ENCODE measurements at regions of chr19 and their contacts with region 1.

Region 1: GRCh38 chr19:1249298-1249989 is 1.1 kb downstream of the MIDN start:
- DNase-seq: peak; percentile 95
- ATAC-seq: peak; percentile 56
- H3K4me3 Mint-ChIP-seq: peak overlapping the region; percentile 74
- H3K27ac Mint-ChIP-seq: peak overlapping the region; percentile 82
- H3K4me1 Mint-ChIP-seq: peaks cover 9% of the 10 kb centered on the region
- H3K27me3 Mint-ChIP-seq: no peaks in the 10 kb centered on the region

Region 2: DNA sequence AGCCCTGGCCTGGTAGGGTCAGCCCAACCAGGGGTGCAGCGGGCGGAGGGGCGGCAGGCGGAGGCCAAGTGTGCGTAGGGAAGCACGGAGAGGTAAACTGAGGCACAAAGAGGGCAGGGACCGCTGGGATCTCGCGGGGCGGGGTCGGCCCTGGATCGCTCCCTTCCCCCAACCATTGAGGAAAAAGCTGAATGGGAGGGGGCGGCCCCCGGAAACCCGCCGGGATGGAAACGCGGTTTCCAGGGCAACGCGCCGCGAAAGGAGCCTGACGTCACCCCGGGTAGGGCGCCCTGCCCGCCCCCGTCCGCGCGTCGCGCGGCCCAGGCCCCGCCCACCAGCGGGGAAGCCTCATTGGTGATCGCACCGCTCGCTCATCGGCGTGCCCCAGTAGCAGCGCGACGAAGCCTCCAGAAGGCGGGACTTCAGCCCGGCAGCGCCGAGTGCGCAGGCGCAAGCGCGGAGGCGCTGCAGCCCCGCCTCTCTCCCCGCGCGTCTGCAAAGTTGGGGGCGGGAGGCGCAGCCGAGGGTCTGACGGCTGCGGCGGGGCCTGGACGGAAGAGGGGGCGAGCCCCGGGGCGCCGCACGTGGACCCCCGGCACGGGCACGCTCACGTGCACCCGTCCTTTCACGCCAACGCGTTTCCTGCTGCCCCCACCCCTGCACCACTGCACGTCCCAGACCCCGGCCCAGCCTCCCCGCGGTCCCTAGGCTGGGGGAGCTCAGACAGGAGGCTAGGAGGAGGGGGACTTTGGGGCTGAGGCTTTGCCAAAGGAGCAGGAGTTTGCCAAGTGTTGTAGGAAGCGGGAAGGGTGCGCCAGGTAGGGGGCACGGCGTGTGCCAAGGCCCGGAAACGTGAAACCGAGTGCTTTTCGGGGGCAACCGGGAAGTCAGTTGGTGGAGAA is 11.4 kb after region 1 on chr19:
- CTCF ChIA-PET with region 1: interaction called, 723 read pairs
- DNase-seq: peak; percentile 98
- ATAC-seq: peak; percentile 78
- H3K4me3 Mint-ChIP-seq: peak overlapping the region; percentile 96
- H3K27ac Mint-ChIP-seq: peak overlapping the region; percentile 98
- H3K4me1 Mint-ChIP-seq: peaks cover 52% of the 10 kb centered on the region
- H3K27me3 Mint-ChIP-seq: no peaks in the 10 kb centered on the region

Region 3: GRCh38 chr19:1269065-1269477 is 19.6 kb after region 1 on chr19 and contains the start of gene CIRBP:
- CTCF ChIA-PET with region 1: interaction called, 723 read pairs
- DNase-seq: peak; percentile 100
- ATAC-seq: peak; percentile 81
- H3K4me3 Mint-ChIP-seq: peak within 1 kb of the TSS; percentile 86
- H3K27ac Mint-ChIP-seq: peak within 1 kb of the TSS; percentile 89
- H3K4me1 Mint-ChIP-seq: peaks cover 70% of the 10 kb centered on the region
- H3K27me3 Mint-ChIP-seq: peaks cover 2% of the 10 kb centered on the region
- total RNA-seq, gene CIRBP: 189 to 210 TPM

Region 4: GRCh38 chr19:1455336-1456120 is 206.1 kb after region 1 on chr19:
- CTCF ChIA-PET with region 1: no interaction called
- DNase-seq: peak; percentile 74
- ATAC-seq: peak; percentile 75
- H3K4me3 Mint-ChIP-seq: no peak overlapping the region
- H3K27ac Mint-ChIP-seq: no peak overlapping the region
- H3K4me1 Mint-ChIP-seq: peaks cover 11% of the 10 kb centered on the region
- H3K27me3 Mint-ChIP-seq: peaks cover 48% of the 10 kb centered on the region